PC-9 (cell line): ENCODE measurements at regions of chr3 and their contacts with region 1.

Region 1: DNA sequence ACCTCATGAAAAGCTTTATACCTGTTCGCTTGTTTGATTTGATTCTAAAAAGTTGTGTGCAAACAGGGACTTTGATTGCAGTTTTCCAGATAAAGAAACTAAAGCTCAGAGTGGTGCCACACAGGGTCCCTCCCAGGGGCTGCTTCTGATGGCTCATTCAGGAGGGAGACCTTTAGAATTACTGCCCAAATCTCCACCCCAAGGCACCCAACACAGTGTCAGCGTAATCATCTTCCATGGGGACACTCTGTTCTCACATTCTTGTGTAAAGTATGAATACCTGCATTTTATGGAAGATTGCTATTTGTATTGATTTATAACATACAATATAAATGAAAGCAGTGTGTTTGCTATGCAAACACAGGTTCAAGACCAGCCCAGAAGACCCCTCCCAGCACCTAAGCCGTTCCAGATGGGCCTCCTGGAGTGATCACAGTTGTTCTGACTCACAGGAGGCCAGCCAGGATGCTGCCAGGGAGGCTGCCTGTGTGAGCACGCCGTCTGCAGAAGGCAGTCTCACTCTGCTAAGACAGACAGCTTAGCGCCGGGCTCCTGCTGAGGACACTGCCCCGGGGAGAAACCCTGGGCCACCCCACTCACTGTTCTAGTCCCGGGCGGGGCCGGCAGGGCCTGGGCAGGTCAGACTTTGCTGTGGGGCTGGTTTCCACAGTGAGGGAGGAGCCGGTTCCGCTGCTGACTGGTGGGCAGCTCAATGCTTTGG is 185.6 kb downstream of the FAM43A start:
- DNase-seq: peak; percentile 83 to 94
- H3K4me3 ChIP-seq: peak overlapping the region; percentile 14; the same call in 1 of the 2 replicates
- H3K27ac ChIP-seq: peak overlapping the region; percentile 91
- H3K4me1 ChIP-seq: peaks cover 50% of the 10 kb centered on the region
- H3K27me3 ChIP-seq: no peaks in the 10 kb centered on the region
- CTCF ChIP-seq: peak; percentile 20; the same call in 1 of the 2 replicates

Region 2: GRCh38 chr3:194730321-194730744 is 141.0 kb before region 1 on chr3:
- CTCF ChIA-PET with region 1: no interaction called
- POLR2A ChIA-PET with region 1: interaction called, 21 read pairs
- intact Hi-C with region 1: no loop called
- DNase-seq: peak in 1 of 2 experiments; percentile 80
- H3K4me3 ChIP-seq: no peak overlapping the region
- H3K27ac ChIP-seq: no peak overlapping the region
- H3K4me1 ChIP-seq: no peaks in the 10 kb centered on the region
- H3K27me3 ChIP-seq: no peaks in the 10 kb centered on the region
- CTCF ChIP-seq: no peak

Region 3: DNA sequence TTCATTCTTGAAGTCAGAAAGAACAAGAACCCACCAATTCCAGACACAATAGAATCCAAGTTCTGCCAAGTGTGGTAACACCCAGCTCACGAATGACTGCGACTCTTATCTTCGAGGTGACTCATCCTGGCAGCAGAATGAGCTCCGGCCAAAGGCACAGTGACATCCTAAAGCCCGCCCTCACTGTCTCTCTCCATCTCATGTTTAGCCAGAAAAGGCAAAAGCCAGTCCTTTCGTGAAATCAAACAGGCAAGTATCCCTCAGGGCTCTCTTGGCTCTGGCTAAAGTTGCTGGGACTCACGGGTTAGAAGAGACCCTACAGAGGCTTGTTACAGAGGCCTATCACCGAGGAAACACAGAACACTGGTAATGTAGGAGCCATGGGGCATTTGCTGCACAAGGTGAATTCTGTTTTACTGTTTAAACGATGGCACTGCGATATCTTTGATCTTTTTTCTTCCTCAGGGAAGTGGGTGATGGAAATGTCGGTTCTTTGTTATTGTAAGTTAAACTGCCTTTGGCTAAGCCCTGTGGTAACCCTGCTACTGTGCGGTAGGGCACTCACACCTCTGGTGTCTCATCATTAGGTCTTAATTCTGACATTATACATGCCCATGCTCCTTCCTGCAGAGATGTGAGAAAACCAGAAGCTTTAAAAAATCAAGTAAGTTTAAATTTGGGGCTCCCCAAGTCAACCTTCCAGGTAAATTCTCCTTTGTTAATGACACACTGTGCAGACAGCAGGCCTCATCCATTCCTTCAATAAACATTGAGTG is 30.0 kb before region 1 on chr3:
- CTCF ChIA-PET with region 1: no interaction called
- POLR2A ChIA-PET with region 1: interaction called, 4 read pairs
- intact Hi-C with region 1: loop called (anchors 1 kb)
- DNase-seq: peak; percentile 75 to 81
- H3K4me3 ChIP-seq: peak overlapping the region; percentile 32; the same call in 1 of the 2 replicates
- H3K27ac ChIP-seq: peak overlapping the region; percentile 7; the same call in 1 of the 2 replicates
- H3K4me1 ChIP-seq: peaks cover 13% of the 10 kb centered on the region
- H3K27me3 ChIP-seq: no peaks in the 10 kb centered on the region
- CTCF ChIP-seq: no peak

Region 4: DNA sequence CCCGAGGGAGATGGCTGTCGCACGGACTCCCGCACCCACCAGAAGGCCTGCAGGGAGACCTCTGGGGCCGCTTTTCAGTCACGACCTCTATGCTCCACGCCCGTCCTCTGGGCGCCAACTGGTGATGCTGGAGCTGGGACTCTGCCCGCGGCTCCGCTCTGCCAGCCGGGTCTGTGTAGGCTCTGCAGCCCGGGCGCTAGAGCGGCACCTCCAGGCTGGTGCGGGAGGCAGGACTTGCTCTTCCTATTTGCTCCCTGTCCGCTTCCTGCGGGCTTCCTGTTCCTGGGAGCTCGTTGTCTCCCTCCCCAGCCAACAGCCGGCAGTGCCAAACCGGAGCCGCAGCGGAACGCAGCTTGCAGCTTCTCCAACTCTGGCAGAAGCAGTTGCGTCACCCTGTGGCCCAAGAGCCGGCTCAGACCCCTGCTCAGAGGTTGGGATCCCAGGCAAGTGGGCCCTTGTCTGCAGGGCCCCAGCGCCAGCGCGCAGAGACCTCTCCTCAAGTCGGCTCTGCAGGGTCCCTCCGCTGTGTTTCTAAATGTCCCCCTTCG is 113.8 kb after region 1 on chr3:
- CTCF ChIA-PET with region 1: no interaction called
- POLR2A ChIA-PET with region 1: no interaction called
- intact Hi-C with region 1: loop called (anchors 2 kb)
- DNase-seq: no peak
- H3K4me3 ChIP-seq: no peak overlapping the region
- H3K27ac ChIP-seq: no peak overlapping the region
- H3K4me1 ChIP-seq: peaks cover 13% of the 10 kb centered on the region
- H3K27me3 ChIP-seq: no peaks in the 10 kb centered on the region
- CTCF ChIP-seq: no peak

Region 5: GRCh38 chr3:195040090-195040489 is 168.8 kb after region 1 on chr3:
- CTCF ChIA-PET with region 1: no interaction called
- POLR2A ChIA-PET with region 1: no interaction called
- intact Hi-C with region 1: loop called (anchors 2 kb)
- DNase-seq: no peak
- H3K4me3 ChIP-seq: no peak overlapping the region
- H3K27ac ChIP-seq: no peak overlapping the region
- H3K4me1 ChIP-seq: peaks cover 41% of the 10 kb centered on the region
- H3K27me3 ChIP-seq: no peaks in the 10 kb centered on the region
- CTCF ChIP-seq: no peak

Region 6: GRCh38 chr3:195259475-195260279 is 388.4 kb after region 1 on chr3:
- CTCF ChIA-PET with region 1: no interaction called
- POLR2A ChIA-PET with region 1: no interaction called
- intact Hi-C with region 1: loop called (anchors 1 kb)
- DNase-seq: peak; percentile 86 to 96
- H3K4me3 ChIP-seq: peak overlapping the region; percentile 70
- H3K27ac ChIP-seq: peak overlapping the region; percentile 74
- H3K4me1 ChIP-seq: peaks cover 13% of the 10 kb centered on the region
- H3K27me3 ChIP-seq: no peaks in the 10 kb centered on the region
- CTCF ChIP-seq: no peak